ENCODE measurements at regions of chrX and their contacts with region 1.

Region 1: DNA sequence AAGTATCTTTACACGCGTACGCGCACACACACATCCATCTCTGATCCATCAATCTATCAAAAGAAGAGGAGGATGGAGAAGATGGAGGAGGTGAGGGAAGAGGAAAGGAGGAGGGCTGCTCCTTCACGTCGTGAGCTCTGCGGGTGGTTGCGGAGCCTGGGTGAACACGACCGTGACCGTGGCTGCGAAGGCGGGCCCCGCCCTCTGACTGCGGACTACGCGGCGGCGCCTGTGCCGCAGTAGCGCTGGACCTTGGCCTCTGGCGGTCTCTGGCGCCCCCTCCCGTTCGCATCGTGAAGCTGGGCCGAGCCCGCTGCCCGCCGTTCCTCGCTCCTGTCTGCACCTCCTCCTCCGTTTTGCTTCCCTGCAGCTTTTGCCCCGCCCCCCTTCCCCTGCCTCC is 37.7 kb upstream of the ARAF start:
- DNase-seq: peak; percentile 57 to 88
- H3K4me3 ChIP-seq: peak overlapping the region; percentile 51 to 62
- H3K27ac ChIP-seq: peak overlapping the region in 1 of 2 donors; percentile 42
- H3K4me1 ChIP-seq: peaks cover 0 to 4% (median 0%) of the 10 kb centered on the region in 4 donors
- H3K27me3 ChIP-seq: no peaks in the 10 kb centered on the region
- CTCF ChIP-seq: peak; percentile 76 to 81

Region 2: GRCh38 chrX:47384502-47384901 is 138.8 kb before region 1 on chrX:
- intact Hi-C with region 1: loop called (anchors 10 kb)
- DNase-seq: peak; percentile 45 to 61
- H3K4me3 ChIP-seq: no peak overlapping the region
- H3K27ac ChIP-seq: no peak overlapping the region
- H3K4me1 ChIP-seq: no peaks in the 10 kb centered on the region
- H3K27me3 ChIP-seq: no peaks in the 10 kb centered on the region
- CTCF ChIP-seq: peak; percentile 52 to 57

Region 3: DNA sequence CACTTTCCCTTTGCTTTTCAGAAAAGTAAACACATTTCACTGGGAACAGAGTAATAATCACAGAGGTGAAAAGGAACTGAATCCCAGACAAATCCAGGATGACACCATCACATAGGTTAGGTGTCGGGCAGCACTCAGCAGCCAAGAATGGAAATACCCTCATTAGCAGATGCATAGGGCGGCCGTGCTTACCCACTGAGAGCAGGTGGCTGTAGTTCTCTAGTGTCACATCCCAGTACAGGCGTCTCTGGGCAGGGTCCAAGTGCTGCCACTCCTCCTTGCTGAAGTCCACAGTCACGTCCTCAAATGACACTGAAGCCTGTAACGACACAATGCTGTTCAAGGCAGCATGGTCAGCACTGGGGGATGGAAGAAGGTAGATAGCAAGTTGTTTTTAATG is 67.2 kb before region 1 on chrX:
- intact Hi-C with region 1: no loop called
- DNase-seq: no peak
- H3K4me3 ChIP-seq: no peak overlapping the region
- H3K27ac ChIP-seq: no peak overlapping the region
- H3K4me1 ChIP-seq: no peaks in the 10 kb centered on the region
- H3K27me3 ChIP-seq: no peaks in the 10 kb centered on the region
- CTCF ChIP-seq: no peak

Measured in tibial artery (tissue), 4 donors.